Caco-2 (cell line): ENCODE measurements at regions of chr3 and their contacts with region 1.

Region 1: GRCh38 chr3:9915254-9916141 is 1.4 kb upstream of the IL17RC start:
- DNase-seq: peak; percentile 67 to 84
- H3K4me3 ChIP-seq: peak overlapping the region; percentile 73
- H3K4me3 Mint-ChIP-seq: peak overlapping the region; percentile 89
- H3K27ac Mint-ChIP-seq: peak overlapping the region; percentile 76
- H3K4me1 ChIP-seq: peaks cover 21% of the 10 kb centered on the region
- H3K4me1 Mint-ChIP-seq: no peaks in the 10 kb centered on the region
- H3K27me3 ChIP-seq: no peaks in the 10 kb centered on the region
- H3K27me3 Mint-ChIP-seq: no peaks in the 10 kb centered on the region
- CTCF ChIP-seq: peak; percentile 9 to 40

Region 2: GRCh38 chr3:9786825-9787669 is 128.5 kb before region 1 on chr3:
- CTCF ChIA-PET with region 1: no interaction called
- POLR2A ChIA-PET with region 1: no interaction called
- intact Hi-C with region 1: no loop called
- DNase-seq: no peak
- H3K4me3 ChIP-seq: no peak overlapping the region
- H3K4me3 Mint-ChIP-seq: no peak overlapping the region
- H3K27ac Mint-ChIP-seq: no peak overlapping the region
- H3K4me1 ChIP-seq: 0 out of 2 replicates have a peak, but pooled peaks cover 6% of the 10 kb centered on the region
- H3K4me1 Mint-ChIP-seq: peaks cover 12% of the 10 kb centered on the region
- H3K27me3 ChIP-seq: no peaks in the 10 kb centered on the region
- H3K27me3 Mint-ChIP-seq: no peaks in the 10 kb centered on the region
- CTCF ChIP-seq: peak; percentile 30 to 34

Region 3: DNA sequence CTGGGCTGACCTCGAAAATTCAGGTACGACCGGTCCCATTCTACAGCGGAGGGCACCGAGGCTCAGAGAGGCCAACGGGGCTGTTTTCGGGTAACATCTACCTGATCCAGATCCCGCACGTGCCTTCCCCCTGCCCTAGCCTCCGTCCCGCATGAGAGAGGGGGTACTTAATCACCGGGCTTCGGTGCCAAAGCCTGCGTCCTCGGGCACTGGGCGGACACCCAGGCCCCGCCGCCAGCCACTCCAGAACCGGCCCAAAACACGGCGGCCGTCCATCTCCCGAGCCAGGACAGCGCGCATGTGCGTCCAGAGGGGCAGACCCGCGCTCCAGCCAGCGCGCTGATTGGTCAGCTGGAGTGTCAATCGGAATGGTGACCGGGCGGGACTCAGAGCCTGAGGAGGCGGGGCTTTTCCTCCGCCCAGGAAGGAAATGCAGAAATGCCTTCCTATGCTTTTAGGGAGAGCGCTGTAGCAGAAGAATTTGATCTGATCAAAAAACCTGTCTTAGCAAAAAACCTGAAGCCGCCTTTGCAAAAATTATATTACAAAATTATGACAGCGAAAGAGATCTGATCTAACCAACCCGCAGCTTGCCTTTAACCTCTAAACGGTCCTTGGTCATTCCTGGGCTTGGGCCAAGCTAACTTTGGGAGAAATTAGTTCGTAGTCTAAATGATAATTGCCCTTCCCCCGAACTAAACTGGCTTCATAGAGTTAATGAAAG is 71.6 kb before region 1 on chr3 and contains the start of gene RPUSD3:
- CTCF ChIA-PET with region 1: interaction called, 5 read pairs
- POLR2A ChIA-PET with region 1: no interaction called
- intact Hi-C with region 1: loop called (anchors 5 kb)
- DNase-seq: peak; percentile 96 to 98
- H3K4me3 ChIP-seq: peak within 1 kb of the TSS; percentile 79
- H3K4me3 Mint-ChIP-seq: peak within 1 kb of the TSS; percentile 99
- H3K27ac Mint-ChIP-seq: peak within 1 kb of the TSS; percentile 94
- H3K4me1 ChIP-seq: peaks cover 20% of the 10 kb centered on the region
- H3K4me1 Mint-ChIP-seq: peaks cover 14% of the 10 kb centered on the region
- H3K27me3 ChIP-seq: no peaks in the 10 kb centered on the region
- H3K27me3 Mint-ChIP-seq: no peaks in the 10 kb centered on the region
- CTCF ChIP-seq: no peak
- total RNA-seq, gene RPUSD3: 54.8 and 61.8 TPM in 2 replicates

Region 4: GRCh38 chr3:9862391-9863057 is 53.0 kb before region 1 on chr3:
- CTCF ChIA-PET with region 1: no interaction called
- POLR2A ChIA-PET with region 1: no interaction called
- intact Hi-C with region 1: no loop called
- DNase-seq: peak in 1 of 2 experiments; percentile 41
- H3K4me3 ChIP-seq: no peak overlapping the region
- H3K4me3 Mint-ChIP-seq: no peak overlapping the region
- H3K27ac Mint-ChIP-seq: no peak overlapping the region
- H3K4me1 ChIP-seq: no peaks in the 10 kb centered on the region; the same call in 1 of the 2 replicates
- H3K4me1 Mint-ChIP-seq: no peaks in the 10 kb centered on the region
- H3K27me3 ChIP-seq: no peaks in the 10 kb centered on the region
- H3K27me3 Mint-ChIP-seq: no peaks in the 10 kb centered on the region
- CTCF ChIP-seq: peak in 1 of 2 experiments; percentile 38

Region 5: GRCh38 chr3:9884555-9885165 is 30.8 kb before region 1 on chr3:
- CTCF ChIA-PET with region 1: interaction called, 3 read pairs
- POLR2A ChIA-PET with region 1: interaction called, 9 read pairs
- intact Hi-C with region 1: loop called (anchors 1 kb)
- DNase-seq: peak; percentile 83 to 87
- H3K4me3 ChIP-seq: no peak overlapping the region
- H3K4me3 Mint-ChIP-seq: peak overlapping the region; percentile 56
- H3K27ac Mint-ChIP-seq: peak overlapping the region; percentile 94
- H3K4me1 ChIP-seq: peaks cover 18% of the 10 kb centered on the region
- H3K4me1 Mint-ChIP-seq: peaks cover 25% of the 10 kb centered on the region
- H3K27me3 ChIP-seq: no peaks in the 10 kb centered on the region
- H3K27me3 Mint-ChIP-seq: no peaks in the 10 kb centered on the region
- CTCF ChIP-seq: peak in 1 of 2 experiments; percentile 21

Region 6: DNA sequence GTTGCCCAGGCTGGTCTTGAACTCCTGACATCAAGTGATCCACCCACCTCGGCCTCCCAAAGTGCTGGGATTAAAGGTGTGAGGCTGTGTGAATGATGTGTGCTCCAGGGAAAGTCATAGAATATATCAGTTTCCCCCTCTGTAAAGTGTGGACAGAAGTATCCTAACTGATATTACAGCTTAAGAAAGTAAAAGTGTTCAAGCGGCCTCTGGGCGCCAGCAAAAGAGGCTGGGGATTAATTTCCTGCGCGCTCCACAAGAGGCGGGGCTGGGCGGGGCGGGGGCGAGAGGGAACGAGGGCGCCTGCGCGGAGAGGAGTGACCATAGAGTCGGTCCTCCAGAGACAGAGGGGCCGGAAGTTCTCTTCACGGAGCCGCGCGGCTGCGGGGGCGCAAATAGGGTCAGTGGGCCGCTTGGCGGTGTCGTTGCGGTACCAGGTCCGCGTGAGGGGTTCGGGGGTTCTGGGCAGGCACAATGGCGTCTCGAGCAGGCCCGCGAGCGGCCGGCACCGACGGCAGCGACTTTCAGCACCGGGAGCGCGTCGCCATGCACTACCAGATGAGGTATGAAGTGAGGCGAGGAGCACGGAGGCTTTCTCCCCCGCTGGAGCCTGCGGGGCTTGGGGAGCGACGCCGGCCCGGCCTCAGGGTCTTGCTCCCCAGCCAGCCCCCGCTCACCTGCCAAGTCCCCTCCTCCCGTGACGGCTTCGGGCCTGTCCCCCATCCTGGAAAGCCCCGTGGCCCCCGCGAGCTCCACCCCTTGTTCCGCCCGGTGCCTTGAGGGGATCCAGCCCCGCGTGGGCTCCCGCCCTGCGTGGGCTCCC is 25.0 kb before region 1 on chr3 and contains the start of gene JAGN1:
- CTCF ChIA-PET with region 1: no interaction called
- POLR2A ChIA-PET with region 1: interaction called, 3 read pairs
- intact Hi-C with region 1: loop called (anchors 1 kb)
- DNase-seq: peak; percentile 88 to 89
- H3K4me3 ChIP-seq: peak within 1 kb of the TSS; percentile 99
- H3K4me3 Mint-ChIP-seq: peak within 1 kb of the TSS; percentile 83
- H3K27ac Mint-ChIP-seq: peak within 1 kb of the TSS; percentile 91
- H3K4me1 ChIP-seq: no peaks in the 10 kb centered on the region
- H3K4me1 Mint-ChIP-seq: peaks cover 11% of the 10 kb centered on the region
- H3K27me3 ChIP-seq: no peaks in the 10 kb centered on the region
- H3K27me3 Mint-ChIP-seq: no peaks in the 10 kb centered on the region
- CTCF ChIP-seq: no peak
- total RNA-seq, gene JAGN1: 34.2 and 35.9 TPM in 2 replicates

Region 7: GRCh38 chr3:9897408-9898372 is 17.8 kb before region 1 on chr3:
- CTCF ChIA-PET with region 1: interaction called, 8 read pairs
- POLR2A ChIA-PET with region 1: interaction called, 30 read pairs
- intact Hi-C with region 1: loop called (anchors 1 kb)
- DNase-seq: peak; percentile 84 to 91
- H3K4me3 ChIP-seq: no peak overlapping the region
- H3K4me3 Mint-ChIP-seq: peak overlapping the region; percentile 17
- H3K27ac Mint-ChIP-seq: peak overlapping the region; percentile 84
- H3K4me1 ChIP-seq: peaks cover 64% of the 10 kb centered on the region
- H3K4me1 Mint-ChIP-seq: peaks cover 34% of the 10 kb centered on the region
- H3K27me3 ChIP-seq: no peaks in the 10 kb centered on the region
- H3K27me3 Mint-ChIP-seq: no peaks in the 10 kb centered on the region
- CTCF ChIP-seq: no peak

Region 8: DNA sequence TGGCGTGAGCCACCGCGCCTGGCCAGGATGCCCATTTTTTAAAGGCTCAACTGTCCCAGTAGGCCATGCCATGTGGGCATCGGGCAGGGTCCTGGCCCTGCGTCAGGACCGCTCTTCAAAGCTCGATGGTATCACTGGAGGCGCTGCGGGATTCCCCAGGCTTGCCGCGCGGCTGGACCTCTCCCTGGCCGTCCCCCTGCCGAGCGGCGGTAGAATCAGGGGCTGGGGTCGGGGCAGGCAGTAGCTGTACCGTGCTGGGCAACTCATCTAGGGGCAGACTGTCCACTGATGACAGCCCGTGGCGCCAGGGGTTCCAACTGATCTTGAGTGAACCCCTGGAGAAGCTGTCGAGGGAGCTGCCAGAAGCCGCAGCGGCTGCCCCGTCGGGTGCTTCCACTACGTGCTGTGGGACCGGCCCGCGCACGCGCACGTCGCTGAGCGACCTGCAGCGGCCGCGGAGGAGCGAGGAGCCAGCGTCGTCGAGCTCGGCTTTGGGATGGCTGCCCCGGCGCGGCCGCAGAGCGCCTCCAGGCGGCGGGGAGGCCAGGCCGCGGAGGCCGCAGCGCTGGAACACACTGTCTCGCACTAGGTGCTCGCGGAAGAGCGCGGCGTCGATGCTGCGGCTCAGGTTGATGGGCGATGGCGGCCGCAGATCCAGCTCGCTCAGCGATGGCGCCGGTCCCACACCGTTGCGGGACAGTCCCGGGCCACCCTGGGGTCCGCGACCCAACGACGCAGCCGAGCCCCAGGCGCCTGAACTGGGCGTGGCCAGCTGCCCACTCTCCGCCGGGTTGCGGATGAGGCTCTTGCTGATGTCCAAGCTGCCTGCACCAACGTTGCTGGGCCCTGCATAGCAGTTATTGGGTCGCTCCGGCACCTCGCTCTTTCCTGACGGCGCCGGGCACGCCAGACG is 30.9 kb after region 1 on chr3:
- CTCF ChIA-PET with region 1: interaction called, 7 read pairs
- POLR2A ChIA-PET with region 1: interaction called, 12 read pairs
- intact Hi-C with region 1: loop called (anchors 2 kb)
- DNase-seq: peak; percentile 89 to 93
- H3K4me3 ChIP-seq: peak overlapping the region; percentile 60
- H3K4me3 Mint-ChIP-seq: peak overlapping the region; percentile 83
- H3K27ac Mint-ChIP-seq: peak overlapping the region; percentile 83
- H3K4me1 ChIP-seq: 0 out of 2 replicates have a peak, but pooled peaks cover 6% of the 10 kb centered on the region
- H3K4me1 Mint-ChIP-seq: no peaks in the 10 kb centered on the region
- H3K27me3 ChIP-seq: no peaks in the 10 kb centered on the region
- H3K27me3 Mint-ChIP-seq: no peaks in the 10 kb centered on the region
- CTCF ChIP-seq: peak; percentile 50 to 56